Activated B cell treated with CpG ODN at 0.5 μM for 24 hours (primary cell): ENCODE measurements at regions of chrX and their contacts with region 1.

Region 1: DNA sequence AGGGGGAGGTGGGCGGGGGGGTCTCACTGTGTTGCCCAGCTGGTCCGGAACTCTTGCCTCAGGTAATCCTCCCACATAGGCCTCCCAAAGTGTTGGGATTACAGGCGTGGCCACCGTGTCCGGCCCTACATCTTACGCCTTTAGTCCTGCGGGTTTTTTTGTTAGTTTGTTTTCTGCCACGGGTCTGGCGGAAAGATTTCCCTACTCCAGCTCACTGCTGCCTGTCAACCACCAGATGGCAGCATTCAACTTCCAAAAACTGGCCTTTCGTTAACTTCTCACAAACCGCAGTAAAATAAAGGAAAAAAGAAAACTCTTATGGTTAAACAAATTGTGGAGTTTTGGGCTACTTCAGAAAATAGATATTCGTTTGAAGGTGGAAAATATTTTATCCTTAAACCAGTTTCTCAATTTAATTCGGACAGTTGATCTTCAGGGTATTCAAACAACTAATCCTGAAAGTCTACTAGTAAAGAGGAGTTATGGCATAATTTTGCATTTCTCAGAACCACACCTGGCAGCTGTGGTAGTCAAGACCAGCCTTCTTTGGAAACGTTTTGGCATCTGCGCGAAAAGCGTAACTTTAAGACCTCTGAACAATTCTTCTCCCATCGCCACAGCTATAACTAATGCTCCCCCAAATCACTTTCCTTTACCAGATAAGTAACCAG is 41.1 kb downstream of the LUZP4 start:
- DNase-seq: no peak
- ATAC-seq: no peak
- H3K4me3 Mint-ChIP-seq: no peak overlapping the region
- H3K27ac Mint-ChIP-seq: no peak overlapping the region
- H3K4me1 Mint-ChIP-seq: no peaks in the 10 kb centered on the region
- H3K27me3 Mint-ChIP-seq: no peaks in the 10 kb centered on the region
- CTCF ChIP-seq: no peak

Region 2: GRCh38 chrX:115393271-115393670 is 62.6 kb after region 1 on chrX:
- CTCF ChIA-PET with region 1: no interaction called
- POLR2A ChIA-PET with region 1: no interaction called
- intact Hi-C with region 1: loop called (anchors 10 kb)
- DNase-seq: no peak
- ATAC-seq: no peak
- H3K4me3 Mint-ChIP-seq: no peak overlapping the region
- H3K27ac Mint-ChIP-seq: no peak overlapping the region
- H3K4me1 Mint-ChIP-seq: no peaks in the 10 kb centered on the region
- H3K27me3 Mint-ChIP-seq: no peaks in the 10 kb centered on the region
- CTCF ChIP-seq: no peak

Region 3: DNA sequence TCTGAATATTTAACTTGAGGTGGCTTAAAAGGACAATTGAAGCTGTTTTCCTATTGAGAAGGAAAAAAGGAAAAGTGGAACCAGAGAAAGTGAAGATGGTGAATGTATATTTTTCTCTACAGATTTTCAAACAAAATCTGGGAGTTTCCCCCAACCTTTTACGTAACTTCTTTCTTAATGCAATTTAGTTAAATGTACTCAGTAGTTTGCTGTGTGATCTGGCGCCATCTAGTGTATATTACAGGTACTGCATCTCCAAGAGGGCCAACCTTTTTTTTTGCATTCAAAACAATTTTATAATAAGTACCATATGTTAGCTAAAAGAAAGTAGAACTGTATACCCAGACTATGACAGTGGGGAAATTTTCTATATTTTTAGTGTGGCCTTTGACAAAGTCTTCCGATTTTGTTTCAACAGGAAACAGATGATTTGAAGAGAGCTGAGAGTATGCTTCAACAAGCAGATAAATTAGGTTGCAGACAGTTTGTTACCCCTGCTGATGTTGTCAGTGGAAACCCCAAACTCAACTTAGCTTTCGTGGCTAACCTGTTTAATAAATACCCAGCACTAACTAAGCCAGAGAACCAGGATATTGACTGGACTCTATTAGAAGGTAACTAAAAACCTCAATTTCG is 312.4 kb after region 1 on chrX:
- CTCF ChIA-PET with region 1: interaction called, 3 read pairs
- POLR2A ChIA-PET with region 1: no interaction called
- intact Hi-C with region 1: loop called (anchors 1 kb)
- DNase-seq: no peak
- ATAC-seq: no peak
- H3K4me3 Mint-ChIP-seq: no peak overlapping the region
- H3K27ac Mint-ChIP-seq: no peak overlapping the region
- H3K4me1 Mint-ChIP-seq: no peaks in the 10 kb centered on the region
- H3K27me3 Mint-ChIP-seq: no peaks in the 10 kb centered on the region
- CTCF ChIP-seq: no peak

Region 4: GRCh38 chrX:115949898-115950822 is 619.5 kb after region 1 on chrX:
- CTCF ChIA-PET with region 1: no interaction called
- POLR2A ChIA-PET with region 1: no interaction called
- intact Hi-C with region 1: loop called (anchors 5 kb)
- DNase-seq: no peak
- ATAC-seq: no peak
- H3K4me3 Mint-ChIP-seq: no peak overlapping the region
- H3K27ac Mint-ChIP-seq: no peak overlapping the region
- H3K4me1 Mint-ChIP-seq: no peaks in the 10 kb centered on the region
- H3K27me3 Mint-ChIP-seq: no peaks in the 10 kb centered on the region
- CTCF ChIP-seq: no peak